B cell (primary cell): ENCODE measurements at regions of chr1 and their contacts with region 1.

Region 1: DNA sequence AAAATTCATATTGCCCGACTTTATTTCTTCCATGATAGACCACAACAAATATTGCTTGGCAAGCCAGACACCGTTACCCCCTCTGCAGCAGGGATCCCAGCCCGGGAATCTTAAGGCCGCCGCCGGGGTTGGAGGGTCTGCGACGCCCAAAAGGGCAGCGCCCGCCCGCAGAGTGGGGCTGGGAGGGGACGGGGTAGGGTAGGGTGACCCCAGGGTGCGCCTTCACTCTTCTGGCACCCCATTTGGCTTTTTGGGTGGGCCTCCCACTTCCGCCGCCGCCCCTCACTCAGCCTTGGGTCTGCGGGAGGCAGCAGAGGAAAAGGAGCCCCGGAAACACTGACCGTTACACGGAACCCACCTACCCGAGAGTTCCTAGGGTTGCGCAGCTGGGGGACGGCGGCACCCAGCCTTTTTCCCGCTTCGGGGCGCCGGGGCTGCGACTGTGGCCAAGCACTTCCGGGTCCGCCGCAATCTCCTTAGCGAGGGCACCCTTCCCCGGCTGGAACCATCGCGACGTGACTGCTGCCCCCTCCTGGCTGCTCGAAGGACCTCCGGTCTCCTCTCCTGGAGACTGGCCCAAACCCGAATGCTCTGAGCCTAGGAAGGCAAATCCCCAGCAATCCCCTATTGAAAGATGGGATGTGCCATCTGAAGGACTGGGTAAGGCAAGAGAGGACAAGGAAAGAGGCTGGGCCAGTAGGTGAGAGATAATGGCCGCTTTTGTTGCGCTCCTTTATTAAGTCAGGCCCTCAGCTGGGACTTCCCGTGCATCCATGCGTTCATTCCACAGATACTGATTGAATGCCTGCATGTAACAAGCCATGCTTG is at the start of gene PIGC:
- DNase-seq: peak; percentile 92
- ATAC-seq: peak; percentile 100
- H3K4me3 ChIP-seq: peak within 1 kb of the TSS; percentile 68 to 95 (median 93)
- H3K4me3 Mint-ChIP-seq: peak within 1 kb of the TSS; percentile 96
- H3K27ac ChIP-seq: peak within 1 kb of the TSS; percentile 77 to 86
- H3K27ac Mint-ChIP-seq: peak within 1 kb of the TSS; percentile 90
- H3K4me1 ChIP-seq: peaks cover 11 to 16% of the 10 kb centered on the region in 2 donors
- H3K4me1 Mint-ChIP-seq: peaks cover 37% of the 10 kb centered on the region
- H3K27me3 ChIP-seq: no peaks in the 10 kb centered on the region
- H3K27me3 Mint-ChIP-seq: no peaks in the 10 kb centered on the region
- CTCF ChIP-seq: peak; percentile 91
- total RNA-seq, gene PIGC: 28.8 TPM in 2 replicates

Region 2: GRCh38 chr1:171741872-171742576 is 701.8 kb before region 1 on chr1 and contains the start of gene VAMP4:
- CTCF ChIA-PET with region 1: no interaction called
- POLR2A ChIA-PET with region 1: no interaction called
- intact Hi-C with region 1: loop called (anchors 5 kb)
- DNase-seq: peak; percentile 92
- ATAC-seq: peak; percentile 90
- H3K4me3 ChIP-seq: peak within 1 kb of the TSS; percentile 69 to 95 (median 93)
- H3K4me3 Mint-ChIP-seq: peak within 1 kb of the TSS; percentile 100
- H3K27ac ChIP-seq: peak within 1 kb of the TSS; percentile 91
- H3K27ac Mint-ChIP-seq: peak within 1 kb of the TSS; percentile 100
- H3K4me1 ChIP-seq: peaks cover 20 to 23% of the 10 kb centered on the region in 2 donors
- H3K4me1 Mint-ChIP-seq: peaks cover 40% of the 10 kb centered on the region
- H3K27me3 ChIP-seq: no peaks in the 10 kb centered on the region
- H3K27me3 Mint-ChIP-seq: no peaks in the 10 kb centered on the region
- CTCF ChIP-seq: no peak
- total RNA-seq, gene VAMP4: 17.5 and 21.8 TPM in 2 replicates

Region 3: GRCh38 chr1:171781176-171781875 is 662.5 kb before region 1 on chr1 and contains the start of gene METTL13:
- CTCF ChIA-PET with region 1: no interaction called
- POLR2A ChIA-PET with region 1: no interaction called
- intact Hi-C with region 1: loop called (anchors 5 kb)
- DNase-seq: peak; percentile 99
- ATAC-seq: peak; percentile 91
- H3K4me3 ChIP-seq: peak within 1 kb of the TSS; percentile 82 to 100 (median 89)
- H3K4me3 Mint-ChIP-seq: peak within 1 kb of the TSS; percentile 96
- H3K27ac ChIP-seq: peak within 1 kb of the TSS; percentile 71 to 81
- H3K27ac Mint-ChIP-seq: peak within 1 kb of the TSS; percentile 94
- H3K4me1 ChIP-seq: peaks cover 26 to 32% of the 10 kb centered on the region in 2 donors
- H3K4me1 Mint-ChIP-seq: peaks cover 44% of the 10 kb centered on the region
- H3K27me3 ChIP-seq: no peaks in the 10 kb centered on the region
- H3K27me3 Mint-ChIP-seq: peaks cover 8% of the 10 kb centered on the region
- CTCF ChIP-seq: no peak
- total RNA-seq, gene METTL13: 33.0 and 35.4 TPM in 2 replicates

Region 4: GRCh38 chr1:171801487-171801891 is 642.4 kb before region 1 on chr1:
- CTCF ChIA-PET with region 1: interaction called, 4 read pairs
- POLR2A ChIA-PET with region 1: no interaction called
- intact Hi-C with region 1: loop called (anchors 1 kb)
- DNase-seq: peak; percentile 38
- ATAC-seq: peak; percentile 51
- H3K4me3 ChIP-seq: no peak overlapping the region
- H3K4me3 Mint-ChIP-seq: no peak overlapping the region
- H3K27ac ChIP-seq: no peak overlapping the region
- H3K27ac Mint-ChIP-seq: no peak overlapping the region
- H3K4me1 ChIP-seq: peaks cover 7 to 11% of the 10 kb centered on the region in 2 donors
- H3K4me1 Mint-ChIP-seq: peaks cover 15% of the 10 kb centered on the region
- H3K27me3 ChIP-seq: no peaks in the 10 kb centered on the region
- H3K27me3 Mint-ChIP-seq: no peaks in the 10 kb centered on the region
- CTCF ChIP-seq: peak; percentile 82

Region 5: DNA sequence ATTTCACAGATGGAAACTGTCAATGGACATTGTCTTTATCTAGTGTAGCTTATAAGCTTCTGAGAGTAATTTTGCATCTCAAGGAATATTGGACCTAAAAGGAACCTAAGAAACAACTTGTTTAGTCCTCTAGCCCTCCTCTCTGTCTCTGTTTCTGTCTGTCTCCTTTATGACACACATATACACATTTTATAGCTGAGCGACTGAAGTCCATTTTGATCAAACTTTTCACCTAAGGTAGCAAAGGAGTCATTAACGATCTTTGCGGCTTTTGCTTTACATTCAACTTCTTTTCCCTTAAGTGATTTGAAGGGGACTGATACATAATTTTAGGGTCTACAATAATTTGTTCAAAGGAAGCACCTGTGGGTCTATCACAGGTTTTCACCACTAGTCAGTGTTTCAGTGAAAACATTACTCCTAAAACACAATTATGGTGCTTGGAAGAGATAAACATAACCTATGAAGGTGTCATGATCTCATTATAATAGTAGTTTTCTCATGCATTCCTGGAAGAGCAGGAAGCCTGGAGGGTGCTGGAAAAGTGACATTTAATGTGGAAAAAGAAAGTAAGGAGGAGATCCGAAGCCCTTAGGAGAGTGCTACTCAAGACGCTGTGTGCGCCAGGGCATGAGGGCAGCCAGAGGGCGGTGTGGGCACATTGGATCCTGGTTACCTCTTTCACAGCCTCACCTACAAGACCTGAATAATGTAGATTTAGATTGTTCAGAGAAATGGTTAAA is 353.9 kb before region 1 on chr1:
- CTCF ChIA-PET with region 1: interaction called, 23 read pairs
- POLR2A ChIA-PET with region 1: no interaction called
- intact Hi-C with region 1: loop called (anchors 1 kb)
- DNase-seq: peak; percentile 75
- ATAC-seq: peak; percentile 80
- H3K4me3 ChIP-seq: peak overlapping the region in 1 of 5 experiments; percentile 7
- H3K4me3 Mint-ChIP-seq: no peak overlapping the region
- H3K27ac ChIP-seq: no peak overlapping the region
- H3K27ac Mint-ChIP-seq: no peak overlapping the region
- H3K4me1 ChIP-seq: no peaks in the 10 kb centered on the region
- H3K4me1 Mint-ChIP-seq: peaks cover 9% of the 10 kb centered on the region
- H3K27me3 ChIP-seq: no peaks in the 10 kb centered on the region
- H3K27me3 Mint-ChIP-seq: no peaks in the 10 kb centered on the region
- CTCF ChIP-seq: peak; percentile 84

Region 6: DNA sequence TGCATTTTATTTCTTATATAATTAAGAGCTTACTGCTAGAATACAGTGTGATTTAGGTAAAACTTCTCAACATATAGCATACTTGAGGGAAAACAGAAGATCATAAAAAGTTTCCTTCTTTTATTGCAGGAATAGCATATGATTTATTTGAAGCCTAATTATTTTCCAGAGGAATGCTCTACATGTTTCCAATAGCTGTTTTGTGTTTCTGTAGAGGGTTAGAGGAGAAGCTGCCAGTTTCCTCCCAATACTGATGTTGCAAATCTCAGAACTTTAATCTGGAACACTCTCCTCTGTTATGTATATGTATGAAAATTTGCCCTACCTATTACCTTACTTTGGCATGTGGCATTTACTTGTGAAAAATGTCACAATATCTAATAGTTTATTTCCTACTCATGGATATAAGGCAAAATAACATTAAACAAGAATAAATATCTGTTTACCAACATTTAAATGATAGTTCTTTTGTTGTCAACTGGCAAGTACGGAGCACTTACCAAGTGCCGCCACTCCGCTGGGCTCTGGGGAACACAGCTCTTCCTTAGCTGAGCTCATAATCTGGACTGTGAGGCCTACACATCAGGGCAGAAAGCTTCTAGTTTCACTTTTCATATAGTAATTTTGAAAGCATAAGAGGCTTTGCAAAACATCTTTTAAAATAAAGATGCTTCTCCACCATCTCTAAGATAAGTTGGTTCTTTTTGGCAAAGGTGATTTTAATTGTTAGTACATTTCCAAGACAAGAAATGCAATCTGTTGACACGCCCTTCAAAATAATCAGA is 263.1 kb before region 1 on chr1:
- CTCF ChIA-PET with region 1: no interaction called
- POLR2A ChIA-PET with region 1: no interaction called
- intact Hi-C with region 1: loop called (anchors 5 kb)
- DNase-seq: peak; percentile 72
- ATAC-seq: peak; percentile 74
- H3K4me3 ChIP-seq: peak overlapping the region in 3 of 5 experiments; percentile 32 to 50 (median 38)
- H3K4me3 Mint-ChIP-seq: peak overlapping the region; percentile 86
- H3K27ac ChIP-seq: peak overlapping the region; percentile 77 to 93
- H3K27ac Mint-ChIP-seq: peak overlapping the region; percentile 97
- H3K4me1 ChIP-seq: peaks cover 52 to 56% of the 10 kb centered on the region in 2 donors
- H3K4me1 Mint-ChIP-seq: peaks cover 46% of the 10 kb centered on the region
- H3K27me3 ChIP-seq: no peaks in the 10 kb centered on the region
- H3K27me3 Mint-ChIP-seq: no peaks in the 10 kb centered on the region
- CTCF ChIP-seq: no peak

Region 7: GRCh38 chr1:172429331-172430127 is 14.3 kb before region 1 on chr1:
- CTCF ChIA-PET with region 1: interaction called, 15 read pairs
- POLR2A ChIA-PET with region 1: no interaction called
- intact Hi-C with region 1: no loop called
- DNase-seq: peak; percentile 71
- ATAC-seq: peak; percentile 76
- H3K4me3 ChIP-seq: no peak overlapping the region
- H3K4me3 Mint-ChIP-seq: no peak overlapping the region
- H3K27ac ChIP-seq: no peak overlapping the region
- H3K27ac Mint-ChIP-seq: no peak overlapping the region
- H3K4me1 ChIP-seq: peaks cover 10 to 12% of the 10 kb centered on the region in 2 donors
- H3K4me1 Mint-ChIP-seq: peaks cover 14% of the 10 kb centered on the region
- H3K27me3 ChIP-seq: no peaks in the 10 kb centered on the region
- H3K27me3 Mint-ChIP-seq: no peaks in the 10 kb centered on the region
- CTCF ChIP-seq: peak; percentile 71